T-cell (primary cell): ENCODE measurements at regions of chr2 and their contacts with region 1.

Region 1: GRCh38 chr2:168336864-168337263 is 89.5 kb upstream of the STK39 start:
- DNase-seq: peak; percentile 22 to 70 (median 48)
- ATAC-seq: peak; percentile 92 to 98 (median 93)
- H3K4me3 ChIP-seq: no peak overlapping the region
- H3K4me3 Mint-ChIP-seq: no peak overlapping the region
- H3K27ac ChIP-seq: no peak overlapping the region
- H3K27ac Mint-ChIP-seq: no peak overlapping the region
- H3K4me1 ChIP-seq: no peaks in the 10 kb centered on the region
- H3K4me1 Mint-ChIP-seq: peaks cover 0 to 6% (median 2%) of the 10 kb centered on the region in 3 donors
- H3K27me3 ChIP-seq: no peaks in the 10 kb centered on the region
- H3K27me3 Mint-ChIP-seq: peaks cover 0 to 5% of the 10 kb centered on the region in 2 donors

Region 2: DNA sequence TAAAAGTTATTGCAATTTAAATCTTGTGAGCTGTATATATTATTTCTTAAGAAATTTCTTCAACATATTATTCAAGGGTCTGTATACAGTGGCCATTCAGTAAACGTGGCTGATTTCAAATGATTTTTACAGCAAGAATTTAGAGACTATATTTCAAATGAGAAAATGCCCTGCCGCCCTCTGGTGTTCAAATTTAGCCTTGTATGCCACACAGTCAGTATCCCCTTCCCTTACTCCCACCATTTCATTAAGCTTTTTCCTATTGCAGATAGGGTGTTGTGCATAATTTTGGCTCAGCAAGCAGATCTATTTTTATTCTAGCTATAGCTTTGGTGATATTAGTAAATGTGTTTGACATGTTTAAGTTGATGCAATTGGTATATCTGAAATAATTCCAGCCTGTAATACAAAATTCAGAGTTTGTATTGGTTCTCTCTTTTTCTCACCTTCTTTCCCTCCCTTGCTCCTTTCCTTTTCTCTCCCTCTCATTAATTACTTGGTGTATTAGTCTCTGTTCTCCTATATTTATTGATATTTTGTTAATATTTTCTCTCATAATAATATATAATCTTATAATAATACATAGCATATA is 1820.1 kb before region 1 on chr2:
- CTCF ChIA-PET with region 1: no interaction called
- POLR2A ChIA-PET with region 1: no interaction called
- DNase-seq: peak in 1 of 35 experiments; percentile 1
- ATAC-seq: no peak
- H3K4me3 ChIP-seq: no peak overlapping the region
- H3K4me3 Mint-ChIP-seq: no peak overlapping the region
- H3K27ac ChIP-seq: no peak overlapping the region
- H3K27ac Mint-ChIP-seq: no peak overlapping the region
- H3K4me1 ChIP-seq: no peaks in the 10 kb centered on the region
- H3K4me1 Mint-ChIP-seq: no peaks in the 10 kb centered on the region
- H3K27me3 ChIP-seq: no peaks in the 10 kb centered on the region
- H3K27me3 Mint-ChIP-seq: peaks cover 0 to 3% of the 10 kb centered on the region in 2 donors

Region 3: DNA sequence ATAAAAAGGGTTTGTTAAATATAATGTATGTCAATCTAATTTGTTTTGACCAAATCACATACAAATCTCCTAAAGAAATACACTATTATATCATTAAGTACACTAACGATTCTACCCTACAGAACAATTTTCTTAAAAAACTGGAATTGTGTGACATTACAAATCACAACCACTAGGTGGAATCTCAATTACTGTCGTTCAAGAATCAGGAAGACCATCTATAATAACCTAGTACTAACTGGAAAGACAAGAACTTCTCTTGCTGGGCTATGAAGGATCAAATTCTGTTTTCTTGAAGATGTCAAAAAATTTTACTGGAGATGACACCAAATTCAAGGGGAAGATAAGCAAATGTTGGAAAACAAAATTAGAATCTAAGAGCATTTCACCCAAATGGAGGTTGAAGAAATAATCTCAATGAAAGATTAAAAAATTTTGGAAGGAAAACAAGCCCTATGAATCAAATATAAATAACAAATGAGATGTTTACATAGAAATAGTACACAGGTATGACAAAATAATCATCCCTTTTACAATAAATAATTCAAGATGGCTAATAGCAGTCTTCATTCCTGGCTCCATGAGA is 200.4 kb before region 1 on chr2:
- CTCF ChIA-PET with region 1: interaction called, 6 to 17 read pairs
- POLR2A ChIA-PET with region 1: no interaction called
- DNase-seq: peak in 1 of 35 experiments; percentile 59
- ATAC-seq: peak in 1 of 4 experiments; percentile 47
- H3K4me3 ChIP-seq: no peak overlapping the region
- H3K4me3 Mint-ChIP-seq: no peak overlapping the region
- H3K27ac ChIP-seq: no peak overlapping the region
- H3K27ac Mint-ChIP-seq: no peak overlapping the region
- H3K4me1 ChIP-seq: no peaks in the 10 kb centered on the region
- H3K4me1 Mint-ChIP-seq: peaks cover 7 to 29% (median 9%) of the 10 kb centered on the region in 3 donors
- H3K27me3 ChIP-seq: no peaks in the 10 kb centered on the region
- H3K27me3 Mint-ChIP-seq: no peaks in the 10 kb centered on the region

Region 4: GRCh38 chr2:168160897-168161296 is 176.0 kb before region 1 on chr2:
- CTCF ChIA-PET with region 1: interaction called, 9 to 19 read pairs
- POLR2A ChIA-PET with region 1: no interaction called
- DNase-seq: peak in 2 of 35 experiments; percentile 3 to 39
- ATAC-seq: peak in 1 of 4 experiments; percentile 13
- H3K4me3 ChIP-seq: no peak overlapping the region
- H3K4me3 Mint-ChIP-seq: no peak overlapping the region
- H3K27ac ChIP-seq: no peak overlapping the region
- H3K27ac Mint-ChIP-seq: no peak overlapping the region
- H3K4me1 ChIP-seq: peaks cover 0 to 3% of the 10 kb centered on the region in 2 experiments
- H3K4me1 Mint-ChIP-seq: peaks cover 15 to 36% (median 32%) of the 10 kb centered on the region in 3 donors
- H3K27me3 ChIP-seq: no peaks in the 10 kb centered on the region
- H3K27me3 Mint-ChIP-seq: no peaks in the 10 kb centered on the region